IMR-90 (cell line): ENCODE measurements at regions of chr16 and their contacts with region 1.

Region 1: GRCh38 chr16:3021449-3022207 is 1.5 kb downstream of the TNFRSF12A start:
- DNase-seq: peak; percentile 94
- ATAC-seq: peak; percentile 46
- H3K4me3 ChIP-seq: peak overlapping the region; percentile 77
- H3K27ac ChIP-seq: peak overlapping the region; percentile 97
- H3K4me1 ChIP-seq: peaks cover 11% of the 10 kb centered on the region
- H3K27me3 ChIP-seq: no peaks in the 10 kb centered on the region; the same call in 1 of the 2 replicates
- CTCF ChIP-seq: peak; percentile 38
- POLR2A ChIP-seq: peak; percentile 34; the same call in 1 of the 2 replicates
- RAD21 ChIP-seq: no peak

Region 2: DNA sequence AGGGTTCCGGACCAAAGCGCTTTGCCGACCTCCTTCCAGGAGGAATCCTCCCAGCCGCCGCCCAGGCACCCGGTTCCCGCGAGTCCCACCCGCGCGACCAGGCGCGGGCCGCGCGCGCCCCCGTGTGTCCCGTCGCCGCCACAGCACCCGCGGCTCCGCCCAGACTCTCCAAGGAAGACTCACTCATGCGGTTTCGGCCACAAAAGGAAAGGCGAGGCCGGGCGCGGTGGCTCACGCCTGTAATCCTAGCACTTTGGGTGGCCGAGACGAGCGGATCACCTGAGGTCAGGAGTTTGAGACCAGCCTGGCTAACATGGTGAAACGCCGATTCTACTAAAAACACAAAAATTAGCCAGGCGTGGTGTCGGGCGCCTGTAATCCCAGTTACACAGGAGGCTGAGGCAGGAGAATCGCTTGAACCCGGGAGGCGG is 37.9 kb before region 1 on chr16:
- CTCF ChIA-PET with region 1: no interaction called
- POLR2A ChIA-PET with region 1: interaction called, 7 read pairs
- dilution Hi-C with region 1: no loop called
- in situ Hi-C with region 1: no loop called
- intact Hi-C with region 1: loop called (anchors 1 kb)
- DNase-seq: peak; percentile 69
- ATAC-seq: peak; percentile 79
- H3K4me3 ChIP-seq: peak overlapping the region; percentile 18
- H3K27ac ChIP-seq: no peak overlapping the region; the same call in 1 of the 2 replicates
- H3K4me1 ChIP-seq: peaks cover 6% of the 10 kb centered on the region
- H3K27me3 ChIP-seq: peaks cover 4% of the 10 kb centered on the region; the same call in 1 of the 2 replicates
- CTCF ChIP-seq: peak; percentile 94
- POLR2A ChIP-seq: 0 out of 2 replicates have a peak, but pooled peaks have one; percentile 28
- RAD21 ChIP-seq: peak; percentile 77